Posterior cingulate gyrus (tissue), 11 donors: ENCODE measurements at regions of chr4 and their contacts with region 1.

Region 1: DNA sequence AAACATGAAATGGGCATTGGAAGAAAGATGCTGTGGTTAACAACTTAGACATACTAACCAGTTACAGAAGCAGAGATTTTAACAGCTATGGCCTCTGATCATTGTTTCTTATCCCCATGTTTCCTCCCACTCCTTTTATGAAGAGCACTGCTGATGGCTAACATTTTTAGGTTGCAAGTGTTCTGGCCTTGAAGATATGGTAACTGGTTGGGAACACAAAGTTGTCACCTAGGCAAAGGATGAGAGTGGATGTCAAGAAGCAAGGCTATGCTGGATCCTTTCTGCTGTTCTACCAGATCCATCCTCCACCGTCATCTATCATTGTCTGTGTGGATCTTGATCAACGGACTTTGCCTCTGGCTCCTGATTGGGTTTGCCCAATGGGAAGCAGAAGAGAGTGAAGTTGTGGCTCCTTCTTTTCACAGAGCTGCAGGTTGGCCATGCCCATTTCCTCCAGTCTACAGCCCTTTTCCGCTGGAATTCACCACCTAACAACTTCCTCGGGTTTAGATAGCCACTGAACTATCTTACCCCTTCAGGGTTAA is 48.9 kb upstream of the SPP1 start:
- DNase-seq: no peak

Region 2: GRCh38 chr4:87257523-87257922 is 669.1 kb before region 1 on chr4:
- intact Hi-C with region 1: no loop called
- DNase-seq: peak in 1 of 10 donors; percentile 21

Region 3: DNA sequence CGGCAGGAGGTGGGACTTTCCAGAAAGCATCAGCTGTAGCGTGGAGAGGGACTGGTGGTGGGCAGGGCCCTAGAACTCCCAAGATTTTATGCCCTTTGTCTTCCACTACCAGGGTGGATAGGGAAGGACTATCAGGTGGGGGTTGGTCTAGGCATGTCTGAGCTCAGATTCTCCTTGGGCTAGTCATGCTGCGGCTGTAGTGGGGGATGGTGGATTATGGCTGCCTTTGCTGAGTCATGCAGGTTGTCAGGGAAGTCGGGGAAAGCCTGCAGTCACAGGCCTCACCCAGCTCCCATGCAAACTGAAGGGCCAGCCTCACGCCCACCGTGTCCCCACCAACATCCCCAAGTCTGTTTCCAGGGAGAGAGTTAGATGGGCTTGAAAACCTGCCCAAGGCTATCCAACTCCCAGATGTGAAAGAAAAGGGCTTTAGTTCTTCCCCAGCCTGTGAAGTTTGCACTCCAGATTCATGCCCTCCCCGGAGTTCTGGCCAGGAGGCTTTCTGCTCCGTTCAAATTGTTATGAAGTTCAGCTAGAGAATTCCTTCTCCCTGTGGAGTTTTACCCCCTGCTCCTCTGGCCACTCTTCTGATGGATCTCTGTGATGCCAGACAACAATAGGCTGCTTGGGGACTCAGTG is 107.2 kb before region 1 on chr4:
- intact Hi-C with region 1: no loop called
- DNase-seq: peak in 1 of 10 donors; percentile 30

Region 4: GRCh38 chr4:87937523-87937922 is 10.9 kb after region 1 on chr4:
- intact Hi-C with region 1: loop called (anchors 1 kb)
- DNase-seq: no peak

Region 5: DNA sequence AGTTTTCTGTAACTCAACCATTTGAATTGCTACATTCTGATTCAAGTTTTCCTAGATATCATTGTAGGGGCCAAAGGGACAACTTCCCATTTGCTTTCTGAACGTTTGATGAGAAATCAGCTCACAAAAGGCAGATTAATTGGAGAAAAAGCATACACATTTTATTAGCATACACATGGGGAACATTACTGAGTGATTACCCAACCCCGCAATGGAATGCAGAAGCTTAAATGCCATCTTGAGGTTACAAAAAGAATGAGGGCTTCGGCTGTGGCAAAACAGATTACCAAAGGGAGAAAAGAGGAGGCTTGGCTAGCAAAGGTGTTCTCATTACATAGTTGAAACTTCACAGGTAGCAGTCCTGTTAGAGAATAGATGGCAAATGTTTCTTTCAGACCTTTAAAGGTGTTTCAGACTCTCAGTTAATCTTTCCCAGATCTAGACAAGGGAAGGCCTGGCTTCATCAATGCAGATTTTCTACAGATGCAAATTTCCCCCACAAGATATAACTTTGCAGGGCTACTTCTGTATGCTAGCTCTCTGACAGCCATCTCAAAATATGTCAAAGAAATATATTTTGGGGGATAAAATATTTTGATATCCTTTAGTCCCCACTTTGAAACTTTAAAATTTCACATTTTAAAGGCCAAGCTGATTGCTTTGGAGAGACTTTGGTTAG is 425.6 kb after region 1 on chr4:
- intact Hi-C with region 1: no loop called
- DNase-seq: no peak